ENCODE measurements at regions of chr17 and their contacts with region 1.

Region 1: GRCh38 chr17:28494445-28495188 is 11.5 kb upstream of the FOXN1 start:
- DNase-seq: peak; percentile 86
- ATAC-seq: peak; percentile 85
- H3K4me3 ChIP-seq: no peak overlapping the region
- H3K4me3 Mint-ChIP-seq: no peak overlapping the region
- H3K27ac ChIP-seq: no peak overlapping the region
- H3K27ac Mint-ChIP-seq: no peak overlapping the region
- H3K4me1 ChIP-seq: peaks cover 0 to 11% of the 10 kb centered on the region in 2 donors
- H3K4me1 Mint-ChIP-seq: peaks cover 11% of the 10 kb centered on the region
- H3K27me3 ChIP-seq: no peaks in the 10 kb centered on the region
- H3K27me3 Mint-ChIP-seq: no peaks in the 10 kb centered on the region
- CTCF ChIP-seq: peak; percentile 85

Region 2: DNA sequence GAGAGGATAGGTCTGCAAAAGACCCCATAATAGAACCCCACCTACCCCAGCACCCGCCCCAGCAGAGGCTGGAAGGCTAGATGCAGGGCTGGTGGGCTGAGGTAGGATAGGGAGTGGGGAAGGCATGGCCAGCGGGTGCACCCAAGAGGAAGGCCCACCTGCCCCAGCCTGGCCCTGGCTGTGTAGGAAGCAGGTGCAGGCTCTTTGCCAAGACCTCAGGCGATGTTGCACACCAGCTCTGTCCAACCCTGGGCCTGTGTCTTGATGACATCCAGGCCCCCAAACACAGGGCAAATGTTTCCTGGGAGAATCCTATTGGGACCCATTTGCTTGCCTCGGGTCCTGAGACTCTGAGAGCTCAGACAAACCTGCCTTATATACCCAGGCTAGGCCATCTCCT is 45.6 kb after region 1 on chr17:
- CTCF ChIA-PET with region 1: interaction called, 13 read pairs
- POLR2A ChIA-PET with region 1: no interaction called
- intact Hi-C with region 1: loop called (anchors 1 kb)
- DNase-seq: no peak
- ATAC-seq: no peak
- H3K4me3 ChIP-seq: no peak overlapping the region
- H3K4me3 Mint-ChIP-seq: no peak overlapping the region
- H3K27ac ChIP-seq: no peak overlapping the region
- H3K27ac Mint-ChIP-seq: no peak overlapping the region
- H3K4me1 ChIP-seq: peaks cover 4 to 13% of the 10 kb centered on the region in 2 donors
- H3K4me1 Mint-ChIP-seq: peaks cover 11% of the 10 kb centered on the region
- H3K27me3 ChIP-seq: no peaks in the 10 kb centered on the region
- H3K27me3 Mint-ChIP-seq: no peaks in the 10 kb centered on the region
- CTCF ChIP-seq: no peak

Region 3: GRCh38 chr17:28612936-28613872 is 118.6 kb after region 1 on chr17:
- CTCF ChIA-PET with region 1: interaction called, 220 read pairs
- POLR2A ChIA-PET with region 1: no interaction called
- intact Hi-C with region 1: no loop called
- DNase-seq: peak; percentile 63
- ATAC-seq: peak; percentile 64
- H3K4me3 ChIP-seq: no peak overlapping the region
- H3K4me3 Mint-ChIP-seq: no peak overlapping the region
- H3K27ac ChIP-seq: peak overlapping the region in 1 of 2 donors; percentile 46
- H3K27ac Mint-ChIP-seq: peak overlapping the region; percentile 32
- H3K4me1 ChIP-seq: peaks cover 22 to 33% of the 10 kb centered on the region in 2 donors
- H3K4me1 Mint-ChIP-seq: peaks cover 38% of the 10 kb centered on the region
- H3K27me3 ChIP-seq: no peaks in the 10 kb centered on the region
- H3K27me3 Mint-ChIP-seq: no peaks in the 10 kb centered on the region
- CTCF ChIP-seq: peak; percentile 82

Region 4: DNA sequence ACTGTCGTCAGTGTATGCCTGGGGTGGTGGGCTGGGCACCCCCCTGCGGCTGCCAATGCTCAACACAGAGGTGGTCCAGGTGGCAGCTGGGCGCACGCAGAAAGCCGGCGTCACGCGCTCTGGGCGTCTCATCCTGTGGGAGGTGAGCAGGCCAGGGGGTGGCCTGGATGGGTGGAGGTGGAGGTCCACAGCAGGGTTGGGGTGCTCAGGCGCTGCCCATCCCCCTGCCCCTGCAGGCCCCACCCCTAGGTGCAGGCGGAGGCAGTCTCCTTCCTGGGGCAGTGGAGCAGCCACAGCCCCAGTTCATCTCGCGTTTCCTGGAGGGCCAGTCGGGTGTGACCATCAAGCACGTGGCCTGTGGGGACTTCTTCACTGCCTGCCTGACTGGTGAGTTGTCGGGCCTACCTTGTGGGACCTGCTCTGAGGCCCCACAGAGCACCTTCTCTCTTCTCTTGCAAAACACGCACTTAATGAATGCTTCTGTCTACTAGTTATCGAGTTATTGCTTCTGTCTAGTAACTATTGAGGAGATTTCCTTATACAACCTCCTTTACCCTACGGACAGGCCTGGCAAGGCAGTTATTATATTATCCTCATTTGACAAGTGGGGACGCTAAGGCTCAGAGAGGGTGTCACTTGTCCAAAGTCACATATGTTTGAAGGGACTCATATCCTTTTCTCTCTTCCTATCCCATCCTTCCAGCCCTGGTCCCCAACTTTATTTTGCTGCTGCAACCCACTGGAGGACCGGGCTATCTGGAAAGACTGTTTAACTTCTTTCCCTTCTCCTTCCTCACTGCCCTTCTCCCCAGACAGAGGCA is 243.5 kb after region 1 on chr17:
- CTCF ChIA-PET with region 1: no interaction called
- POLR2A ChIA-PET with region 1: no interaction called
- intact Hi-C with region 1: no loop called
- DNase-seq: peak; percentile 94
- ATAC-seq: peak; percentile 73
- H3K4me3 ChIP-seq: peak overlapping the region in 4 of 5 experiments; percentile 15 to 39 (median 28)
- H3K4me3 Mint-ChIP-seq: peak overlapping the region; percentile 94
- H3K27ac ChIP-seq: peak overlapping the region; percentile 95 to 100
- H3K27ac Mint-ChIP-seq: peak overlapping the region; percentile 100
- H3K4me1 ChIP-seq: peaks cover 83 to 85% of the 10 kb centered on the region in 2 donors
- H3K4me1 Mint-ChIP-seq: peaks cover 80% of the 10 kb centered on the region
- H3K27me3 ChIP-seq: no peaks in the 10 kb centered on the region
- H3K27me3 Mint-ChIP-seq: no peaks in the 10 kb centered on the region
- CTCF ChIP-seq: no peak

Measured in B cell (primary cell).